Endothelial cell of umbilical vein (primary cell): ENCODE measurements at regions of chr17 and their contacts with region 1.

Region 1: GRCh38 chr17:62671583-62672312 is 44.3 kb downstream of the MRC2 start:
- DNase-seq: no peak
- H3K4me3 ChIP-seq: no peak overlapping the region
- H3K27ac ChIP-seq: no peak overlapping the region
- H3K4me1 ChIP-seq: no peaks in the 10 kb centered on the region
- H3K27me3 ChIP-seq: no peaks in the 10 kb centered on the region
- CTCF ChIP-seq: no peak
- POLR2A ChIP-seq: no peak

Region 2: GRCh38 chr17:62692721-62693483 is 21.2 kb after region 1 on chr17:
- CTCF ChIA-PET with region 1: interaction called, 26 read pairs
- POLR2A ChIA-PET with region 1: no interaction called
- dilution Hi-C with region 1: no loop called
- intact Hi-C with region 1: no loop called
- DNase-seq: no peak
- H3K4me3 ChIP-seq: no peak overlapping the region
- H3K27ac ChIP-seq: no peak overlapping the region
- H3K4me1 ChIP-seq: peaks cover 18% of the 10 kb centered on the region
- H3K27me3 ChIP-seq: no peaks in the 10 kb centered on the region
- CTCF ChIP-seq: peak; percentile 30 to 65
- POLR2A ChIP-seq: no peak

Region 3: GRCh38 chr17:62720089-62720833 is 48.5 kb after region 1 on chr17:
- CTCF ChIA-PET with region 1: interaction called, 26 read pairs
- POLR2A ChIA-PET with region 1: no interaction called
- dilution Hi-C with region 1: no loop called
- intact Hi-C with region 1: loop called (anchors 2 kb)
- DNase-seq: peak; percentile 24
- H3K4me3 ChIP-seq: no peak overlapping the region
- H3K27ac ChIP-seq: no peak overlapping the region
- H3K4me1 ChIP-seq: no peaks in the 10 kb centered on the region
- H3K27me3 ChIP-seq: peaks cover 9 to 10% of the 10 kb centered on the region in 2 experiments
- CTCF ChIP-seq: peak; percentile 8 to 35
- POLR2A ChIP-seq: no peak

Region 4: DNA sequence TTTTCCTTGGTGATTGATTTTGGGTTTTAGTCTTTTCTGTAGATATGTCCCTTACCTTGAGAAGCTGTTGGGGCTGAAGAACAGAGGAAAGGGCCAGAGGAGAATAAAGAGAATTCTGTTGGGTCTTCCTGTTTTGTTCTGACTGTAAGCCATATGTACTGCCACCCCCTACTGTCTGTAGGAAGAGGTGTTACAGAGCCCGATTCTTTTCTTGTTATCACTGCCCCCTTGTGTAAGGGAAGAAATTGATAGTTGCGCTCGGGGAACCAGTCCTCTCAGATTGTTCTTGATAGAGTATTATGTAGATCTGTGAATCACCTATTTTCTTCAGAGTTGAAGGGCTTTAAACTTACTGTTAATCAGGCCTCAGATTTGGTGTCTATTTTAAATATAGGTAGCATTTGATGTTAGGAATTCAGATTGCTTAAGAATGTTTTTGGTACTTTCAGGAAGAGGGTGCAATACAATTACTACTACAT is 296.7 kb after region 1 on chr17:
- CTCF ChIA-PET with region 1: interaction called, 25 read pairs
- POLR2A ChIA-PET with region 1: no interaction called
- dilution Hi-C with region 1: no loop called
- intact Hi-C with region 1: loop called (anchors 1 kb)
- DNase-seq: peak; percentile 90
- H3K4me3 ChIP-seq: no peak overlapping the region
- H3K27ac ChIP-seq: no peak overlapping the region
- H3K4me1 ChIP-seq: peaks cover 19% of the 10 kb centered on the region
- H3K27me3 ChIP-seq: no peaks in the 10 kb centered on the region
- CTCF ChIP-seq: peak; percentile 78 to 80
- POLR2A ChIP-seq: no peak

Region 5: GRCh38 chr17:63082273-63082993 is 410.7 kb after region 1 on chr17:
- CTCF ChIA-PET with region 1: interaction called, 13 read pairs
- POLR2A ChIA-PET with region 1: no interaction called
- dilution Hi-C with region 1: no loop called
- intact Hi-C with region 1: no loop called
- DNase-seq: peak; percentile 58
- H3K4me3 ChIP-seq: no peak overlapping the region
- H3K27ac ChIP-seq: no peak overlapping the region
- H3K4me1 ChIP-seq: no peaks in the 10 kb centered on the region
- H3K27me3 ChIP-seq: no peaks in the 10 kb centered on the region
- CTCF ChIP-seq: peak; percentile 9 to 30
- POLR2A ChIP-seq: no peak